ENCODE measurements at regions of chr4 and their contacts with region 1.

Region 1: GRCh38 chr4:7827991-7828720 is 111.5 kb downstream of the AFAP1 start:
- DNase-seq: peak; percentile 21
- H3K4me3 Mint-ChIP-seq: peak overlapping the region; percentile 41
- H3K27ac Mint-ChIP-seq: peak overlapping the region; percentile 72
- H3K4me1 Mint-ChIP-seq: peaks cover 57% of the 10 kb centered on the region
- H3K27me3 Mint-ChIP-seq: peaks cover 4% of the 10 kb centered on the region

Region 2: DNA sequence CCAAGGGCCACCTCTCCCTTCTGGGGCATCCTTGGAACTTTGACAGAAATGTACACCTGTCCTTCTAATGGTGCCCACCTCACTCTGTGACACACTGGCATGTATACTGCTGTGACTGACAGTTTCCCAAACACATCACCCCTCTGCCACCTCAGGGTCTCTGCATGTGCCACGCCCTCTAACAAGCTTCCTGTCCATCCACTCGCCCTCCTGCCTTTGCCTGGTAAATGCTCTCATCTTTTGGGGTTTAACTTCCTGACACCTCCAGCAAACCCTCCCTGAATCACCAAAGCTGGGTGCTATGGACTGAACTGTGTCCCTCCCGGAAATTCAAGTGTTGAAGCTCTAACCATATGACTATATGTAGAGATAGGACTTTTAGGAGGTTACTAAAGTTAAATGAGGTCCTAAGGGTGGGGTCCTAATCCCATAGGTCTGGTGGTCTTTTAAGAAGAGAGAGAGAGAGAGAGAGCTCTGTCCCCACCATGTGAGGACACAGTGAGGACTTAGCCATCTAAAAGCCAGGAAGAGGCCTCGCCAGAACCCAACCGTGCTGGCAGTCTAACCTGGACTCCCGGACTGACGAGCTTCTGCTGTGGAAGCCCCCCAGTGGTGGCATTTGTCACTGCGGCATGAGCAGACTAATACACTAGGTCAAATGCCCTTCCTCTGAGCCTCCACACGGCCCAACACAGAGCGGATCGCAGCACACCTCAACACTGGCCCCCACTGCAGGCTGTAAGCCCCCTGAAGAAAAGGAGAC is 15.9 kb after region 1 on chr4:
- intact Hi-C with region 1: loop called (anchors 2 kb)
- DNase-seq: peak; percentile 43
- H3K4me3 Mint-ChIP-seq: no peak overlapping the region
- H3K27ac Mint-ChIP-seq: peak overlapping the region; percentile 76
- H3K4me1 Mint-ChIP-seq: peaks cover 20% of the 10 kb centered on the region
- H3K27me3 Mint-ChIP-seq: peaks cover 2% of the 10 kb centered on the region

Region 3: GRCh38 chr4:7863911-7864681 is 35.9 kb after region 1 on chr4:
- intact Hi-C with region 1: loop called (anchors 5 kb)
- DNase-seq: no peak
- H3K4me3 Mint-ChIP-seq: no peak overlapping the region
- H3K27ac Mint-ChIP-seq: peak overlapping the region; percentile 79
- H3K4me1 Mint-ChIP-seq: peaks cover 22% of the 10 kb centered on the region
- H3K27me3 Mint-ChIP-seq: peaks cover 10% of the 10 kb centered on the region

Measured in activated T-helper 1 cell treated with anti-CD3 and anti-CD28 coated beads, Interleukin-12 subunit alpha, Interleukin-12 subunit beta, Interleukin-2, Interleukin-4 antibody, amounts not matched to agents 30 ng/mL and 10 ng/mL and 1 ng/mL, durations not matched to agents 14 hours and 24 hours and 36 hours (primary cell).